ENCODE measurements at regions of chr1 and their contacts with region 1.

Region 1: DNA sequence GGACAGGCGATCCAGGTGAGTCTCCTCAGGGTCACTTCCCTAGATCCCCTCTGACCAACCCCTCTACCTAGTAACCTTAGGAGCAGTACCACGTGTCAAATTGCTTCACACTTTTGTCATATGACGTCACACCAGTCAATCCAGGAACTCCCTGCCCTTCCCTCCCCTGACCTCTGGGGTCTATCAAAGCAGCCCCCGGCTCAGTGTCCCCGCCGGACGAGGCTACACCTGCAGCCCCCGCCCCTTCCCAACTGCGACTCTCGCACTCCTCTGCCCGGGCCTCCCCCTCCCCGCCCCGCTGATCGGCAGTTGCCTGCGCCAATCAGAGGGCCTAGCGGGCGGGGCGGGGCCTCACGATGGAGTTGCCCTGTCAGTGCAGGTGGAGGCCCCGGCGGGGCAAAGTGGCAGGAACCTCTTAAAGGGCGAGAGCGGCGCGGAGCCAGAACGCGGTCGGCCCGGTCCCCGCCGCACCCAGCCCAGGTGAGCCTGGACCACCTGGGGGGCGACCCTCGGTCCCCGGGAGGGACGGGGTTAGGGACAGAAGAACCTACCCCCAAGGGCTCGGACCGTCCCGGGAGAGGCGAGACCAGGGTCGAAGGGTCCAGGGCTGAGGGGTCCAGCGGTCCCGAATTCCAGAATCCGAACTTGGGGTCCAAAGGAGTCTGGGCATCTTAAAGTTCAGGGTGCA is 27.5 kb upstream of the EPB41 start:
- DNase-seq: peak; percentile 93
- H3K4me3 ChIP-seq: peak overlapping the region; percentile 86 to 100 (median 94)
- H3K27ac ChIP-seq: peak overlapping the region; percentile 84 to 87 (median 86)
- H3K4me1 ChIP-seq: peaks cover 20 to 46% (median 30%) of the 10 kb centered on the region in 4 donors
- H3K27me3 ChIP-seq: no peaks in the 10 kb centered on the region
- CTCF ChIP-seq: peak in 1 of 5 experiments; percentile 29
- EP300 ChIP-seq: no peak
- POLR2A ChIP-seq: peak; percentile 84

Region 2: DNA sequence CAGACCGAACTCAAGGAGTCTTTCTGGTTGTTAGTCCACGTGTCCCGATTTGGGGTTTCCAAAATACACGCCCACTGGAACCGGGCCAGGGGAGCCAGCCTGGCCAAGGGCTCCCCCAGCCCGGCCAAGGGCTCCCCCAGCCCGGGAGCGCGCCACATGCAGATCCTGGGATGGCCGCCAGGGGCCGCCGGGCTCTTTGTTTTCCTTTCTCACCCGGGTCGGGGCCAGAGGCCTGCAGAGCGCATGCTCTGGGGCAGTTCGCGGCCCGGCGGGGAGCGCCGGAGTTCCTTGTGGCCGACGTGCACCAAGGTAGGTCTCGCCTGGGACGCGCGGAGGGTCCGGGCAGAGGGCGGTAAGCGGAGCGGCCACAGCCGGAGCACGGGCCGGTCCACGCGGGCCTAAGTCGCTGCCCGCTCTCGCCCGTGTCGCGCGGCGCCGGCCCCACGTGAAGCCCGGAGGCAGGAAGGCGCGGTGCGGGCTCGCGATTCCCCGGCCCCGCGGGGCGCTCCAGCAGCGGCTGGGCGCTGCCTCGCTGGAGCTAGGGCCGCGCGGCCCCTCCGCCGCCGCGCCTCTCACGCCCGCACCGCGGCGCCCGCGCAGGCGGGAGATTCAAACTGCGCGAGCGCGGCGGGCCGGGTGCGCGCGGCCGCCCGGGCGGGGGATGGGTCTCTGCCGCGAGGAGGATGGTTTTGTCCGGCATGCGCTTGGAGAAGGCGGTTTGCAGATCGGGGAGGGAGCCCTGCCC is 368.7 kb before region 1 on chr1:
- in situ Hi-C with region 1: loop called in 1 of 4 experiments (anchors 25 kb)
- intact Hi-C with region 1: no loop called
- DNase-seq: peak; percentile 91
- H3K4me3 ChIP-seq: peak overlapping the region; percentile 53 to 79 (median 70)
- H3K27ac ChIP-seq: peak overlapping the region; percentile 87 to 95 (median 94)
- H3K4me1 ChIP-seq: peaks cover 6 to 16% (median 11%) of the 10 kb centered on the region in 4 donors
- H3K27me3 ChIP-seq: no peaks in the 10 kb centered on the region
- CTCF ChIP-seq: peak; percentile 99 to 100 (median 99)
- EP300 ChIP-seq: no peak
- POLR2A ChIP-seq: peak; percentile 61

Region 3: GRCh38 chr1:28811766-28812668 is 74.9 kb before region 1 on chr1 and contains the start of gene OPRD1:
- in situ Hi-C with region 1: no loop called
- intact Hi-C with region 1: no loop called
- DNase-seq: no peak
- H3K4me3 ChIP-seq: no peak within 1 kb of the TSS
- H3K27ac ChIP-seq: no peak within 1 kb of the TSS
- H3K4me1 ChIP-seq: peaks cover 0 to 3% (median 0%) of the 10 kb centered on the region in 4 donors
- H3K27me3 ChIP-seq: peaks cover 84% of the 10 kb centered on the region
- CTCF ChIP-seq: no peak
- EP300 ChIP-seq: no peak
- POLR2A ChIP-seq: no peak
- total RNA-seq, gene OPRD1: under 0.01 TPM in 1 of 4 donors, not detected in the others

Region 4: GRCh38 chr1:29033829-29034466 is 147.1 kb after region 1 on chr1:
- in situ Hi-C with region 1: loop called (anchors 5 to 10 kb)
- intact Hi-C with region 1: no loop called
- DNase-seq: no peak
- H3K4me3 ChIP-seq: no peak overlapping the region
- H3K27ac ChIP-seq: no peak overlapping the region
- H3K4me1 ChIP-seq: no peaks in the 10 kb centered on the region
- H3K27me3 ChIP-seq: no peaks in the 10 kb centered on the region
- CTCF ChIP-seq: peak; percentile 58 to 77 (median 64)
- EP300 ChIP-seq: no peak
- POLR2A ChIP-seq: no peak

Region 5: DNA sequence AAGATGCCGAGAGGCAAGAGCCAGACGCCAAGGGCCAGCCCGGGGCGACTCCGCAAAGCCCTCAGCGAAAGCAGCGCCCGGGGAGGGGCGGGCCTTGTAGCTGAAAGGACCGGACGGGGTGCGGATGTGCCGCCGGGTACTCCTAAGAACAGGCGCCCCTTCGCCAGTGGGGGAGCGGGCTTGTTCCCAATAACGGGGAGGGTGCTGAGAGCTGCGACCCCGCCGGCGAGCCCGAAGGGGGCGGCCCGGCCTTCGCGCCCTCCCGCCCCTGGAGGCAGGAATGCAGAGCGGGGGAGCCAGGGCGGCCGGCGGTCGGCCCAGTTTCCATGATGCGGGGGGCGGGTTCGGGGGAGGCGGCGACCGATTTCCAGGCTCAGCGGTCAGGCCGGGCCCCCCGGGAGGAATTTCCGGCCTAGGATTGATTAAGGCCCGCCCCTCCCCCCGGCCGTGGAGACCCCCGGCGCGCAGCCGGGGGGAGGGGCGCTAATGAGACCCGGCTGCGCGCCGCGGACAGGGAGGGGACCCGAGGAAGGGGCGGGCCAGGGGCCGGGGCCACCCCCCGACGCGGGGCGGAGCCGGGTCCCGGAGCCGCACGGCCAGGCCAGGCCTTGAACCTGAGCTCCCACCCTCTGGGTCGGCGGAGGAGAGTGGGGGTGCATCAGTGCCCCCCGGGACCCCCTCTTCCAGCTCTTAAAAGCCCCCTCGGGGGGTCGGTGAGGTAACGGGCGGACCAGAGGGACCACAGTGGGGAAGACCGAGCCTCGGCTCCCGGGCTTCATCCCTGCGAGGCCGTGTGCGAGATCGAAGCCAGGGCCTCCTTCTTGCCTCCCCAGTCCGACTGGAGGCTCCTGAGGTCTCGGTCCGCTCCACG is 237.7 kb after region 1 on chr1:
- in situ Hi-C with region 1: no loop called
- intact Hi-C with region 1: loop called (anchors 10 kb)
- DNase-seq: peak; percentile 69
- H3K4me3 ChIP-seq: peak overlapping the region; percentile 46 to 68 (median 58)
- H3K27ac ChIP-seq: peak overlapping the region; percentile 94 to 97 (median 94)
- H3K4me1 ChIP-seq: peaks cover 7 to 50% (median 42%) of the 10 kb centered on the region in 4 donors
- H3K27me3 ChIP-seq: peaks cover 53% of the 10 kb centered on the region
- CTCF ChIP-seq: peak; percentile 65 to 91 (median 85)
- EP300 ChIP-seq: no peak
- POLR2A ChIP-seq: peak; percentile 70

Region 6: GRCh38 chr1:29197585-29197924 is 310.7 kb after region 1 on chr1:
- in situ Hi-C with region 1: loop called in 2 of 4 experiments (anchors 5 to 10 kb)
- intact Hi-C with region 1: loop called (anchors 2 kb)
- DNase-seq: peak; percentile 48
- H3K4me3 ChIP-seq: no peak overlapping the region
- H3K27ac ChIP-seq: peak overlapping the region in 1 of 4 donors; percentile 16
- H3K4me1 ChIP-seq: peaks cover 4 to 15% (median 6%) of the 10 kb centered on the region in 4 donors
- H3K27me3 ChIP-seq: no peaks in the 10 kb centered on the region
- CTCF ChIP-seq: peak; percentile 20 to 56 (median 48)
- EP300 ChIP-seq: no peak
- POLR2A ChIP-seq: no peak

Region 7: GRCh38 chr1:29202584-29203340 is 315.9 kb after region 1 on chr1:
- in situ Hi-C with region 1: loop called in 2 of 4 experiments (anchors 5 to 10 kb)
- intact Hi-C with region 1: loop called (anchors 2 kb)
- DNase-seq: peak; percentile 96
- H3K4me3 ChIP-seq: no peak overlapping the region
- H3K27ac ChIP-seq: peak overlapping the region; percentile 69 to 81 (median 76)
- H3K4me1 ChIP-seq: peaks cover 5 to 14% (median 8%) of the 10 kb centered on the region in 4 donors
- H3K27me3 ChIP-seq: no peaks in the 10 kb centered on the region
- CTCF ChIP-seq: peak; percentile 92 to 97 (median 96)
- EP300 ChIP-seq: no peak
- POLR2A ChIP-seq: no peak

Region 8: DNA sequence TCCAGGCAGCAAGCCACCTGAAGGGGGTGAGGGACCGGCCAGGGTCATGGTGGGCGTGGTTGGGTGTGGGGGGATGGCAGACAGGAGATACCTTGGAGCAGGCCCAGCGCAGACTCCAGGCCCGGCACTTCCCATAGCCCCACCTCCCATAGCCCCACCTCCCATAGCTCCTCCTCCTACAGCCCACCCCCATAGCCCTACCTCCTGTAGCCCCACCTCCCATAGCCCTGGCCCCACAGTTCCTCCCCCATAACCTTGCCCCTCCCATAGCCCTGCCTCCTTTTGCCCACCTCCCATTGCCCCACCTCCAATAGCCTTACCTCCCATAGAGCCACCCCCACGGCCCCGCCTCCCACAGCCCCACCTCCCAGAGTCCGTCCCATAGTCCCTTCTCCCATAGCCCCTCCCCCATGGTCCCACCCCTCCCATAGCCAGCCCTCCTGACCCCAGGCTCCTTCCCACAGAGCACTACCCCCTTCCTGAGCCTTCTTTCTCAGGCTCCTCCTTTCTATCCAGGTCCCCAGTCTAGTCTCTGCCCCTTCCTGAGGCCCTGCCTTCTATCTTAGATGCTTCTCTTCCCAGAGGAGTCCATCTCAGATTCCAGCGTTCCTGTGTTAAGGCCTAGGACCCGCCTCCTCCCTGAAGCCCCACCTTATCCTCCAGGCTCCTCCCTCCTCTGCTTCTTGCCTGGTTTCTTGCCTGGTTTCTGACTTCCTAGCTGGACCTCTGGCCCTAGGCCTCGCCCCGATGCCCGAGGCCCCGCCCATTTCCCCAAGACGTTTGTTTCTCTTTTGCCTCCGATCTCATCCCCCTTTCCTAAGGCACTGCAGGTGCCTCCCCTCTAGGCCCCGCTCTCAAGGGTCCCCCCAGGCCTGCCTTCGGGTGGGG is 396.3 kb after region 1 on chr1:
- in situ Hi-C with region 1: no loop called
- intact Hi-C with region 1: no loop called
- DNase-seq: peak; percentile 56
- H3K4me3 ChIP-seq: no peak overlapping the region
- H3K27ac ChIP-seq: no peak overlapping the region
- H3K4me1 ChIP-seq: no peaks in the 10 kb centered on the region
- H3K27me3 ChIP-seq: no peaks in the 10 kb centered on the region
- CTCF ChIP-seq: no peak
- EP300 ChIP-seq: no peak
- POLR2A ChIP-seq: no peak